Common myeloid progenitor, CD34-positive (primary cell): ENCODE measurements at regions of chr11 and their contacts with region 1.

Region 1: GRCh38 chr11:64723117-64723906 is at the start of gene NRXN2:
- DNase-seq: peak; percentile 72 to 80 (median 77)
- H3K4me3 ChIP-seq: peak within 1 kb of the TSS; percentile 37 to 74 (median 60)
- H3K27ac ChIP-seq: no peak within 1 kb of the TSS
- H3K4me1 ChIP-seq: peaks cover 0 to 27% (median 16%) of the 10 kb centered on the region in 4 experiments
- H3K27me3 ChIP-seq: peaks cover 0 to 22% (median 5%) of the 10 kb centered on the region in 5 experiments

Region 2: DNA sequence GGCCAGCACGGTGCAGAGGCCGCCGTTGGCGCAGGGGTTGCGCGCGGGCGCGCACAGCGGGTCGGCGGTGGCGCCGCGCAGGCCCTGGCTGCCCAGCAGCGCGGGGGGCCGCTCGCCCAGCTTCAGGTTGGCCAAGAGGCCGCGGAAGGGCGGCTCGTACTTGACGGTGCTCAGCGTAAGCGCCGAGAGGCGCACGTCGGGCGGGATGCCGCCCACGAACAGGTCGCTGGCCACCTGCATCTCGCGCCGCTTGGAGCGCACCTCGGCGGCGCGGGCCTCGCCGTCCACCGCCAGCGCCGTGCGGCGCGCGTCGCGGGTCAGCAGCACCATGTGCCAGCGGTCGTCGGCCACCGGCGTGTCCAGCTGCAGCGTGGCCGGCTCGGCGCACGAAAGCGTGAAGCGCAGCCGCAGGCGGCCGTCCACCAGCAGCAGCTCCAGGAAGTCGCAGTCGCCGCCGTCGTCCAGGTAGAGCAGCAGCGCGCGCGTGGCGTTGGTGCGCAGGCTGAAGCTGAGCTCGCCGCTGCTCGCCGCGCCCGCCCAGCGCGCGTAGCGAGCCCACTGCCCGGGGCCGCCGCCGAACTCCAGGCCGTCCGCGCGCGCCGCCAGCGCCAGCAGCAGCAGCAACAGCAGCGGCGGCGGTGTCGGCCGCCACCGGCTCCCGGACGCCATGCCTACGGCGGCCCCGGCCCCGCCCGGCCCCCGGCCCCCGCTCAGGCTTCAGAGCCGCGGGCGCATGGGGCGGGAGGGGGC is 10.1 kb before region 1 on chr11:
- CTCF ChIA-PET with region 1: interaction called, 10 read pairs
- POLR2A ChIA-PET with region 1: no interaction called
- DNase-seq: peak; percentile 54 to 83 (median 78)
- H3K4me3 ChIP-seq: peak overlapping the region in 4 of 7 experiments; percentile 8 to 42 (median 15)
- H3K27ac ChIP-seq: no peak overlapping the region
- H3K4me1 ChIP-seq: peaks cover 0 to 40% (median 37%) of the 10 kb centered on the region in 4 experiments
- H3K27me3 ChIP-seq: peaks cover 0 to 73% (median 35%) of the 10 kb centered on the region in 5 experiments

Region 3: GRCh38 chr11:64734811-64735724 is 11.8 kb after region 1 on chr11:
- CTCF ChIA-PET with region 1: interaction called, 11 read pairs
- POLR2A ChIA-PET with region 1: no interaction called
- DNase-seq: no peak
- H3K4me3 ChIP-seq: no peak overlapping the region
- H3K27ac ChIP-seq: no peak overlapping the region
- H3K4me1 ChIP-seq: peaks cover 0 to under 1% (median 0%) of the 10 kb centered on the region in 4 experiments
- H3K27me3 ChIP-seq: no peaks in the 10 kb centered on the region

Region 4: DNA sequence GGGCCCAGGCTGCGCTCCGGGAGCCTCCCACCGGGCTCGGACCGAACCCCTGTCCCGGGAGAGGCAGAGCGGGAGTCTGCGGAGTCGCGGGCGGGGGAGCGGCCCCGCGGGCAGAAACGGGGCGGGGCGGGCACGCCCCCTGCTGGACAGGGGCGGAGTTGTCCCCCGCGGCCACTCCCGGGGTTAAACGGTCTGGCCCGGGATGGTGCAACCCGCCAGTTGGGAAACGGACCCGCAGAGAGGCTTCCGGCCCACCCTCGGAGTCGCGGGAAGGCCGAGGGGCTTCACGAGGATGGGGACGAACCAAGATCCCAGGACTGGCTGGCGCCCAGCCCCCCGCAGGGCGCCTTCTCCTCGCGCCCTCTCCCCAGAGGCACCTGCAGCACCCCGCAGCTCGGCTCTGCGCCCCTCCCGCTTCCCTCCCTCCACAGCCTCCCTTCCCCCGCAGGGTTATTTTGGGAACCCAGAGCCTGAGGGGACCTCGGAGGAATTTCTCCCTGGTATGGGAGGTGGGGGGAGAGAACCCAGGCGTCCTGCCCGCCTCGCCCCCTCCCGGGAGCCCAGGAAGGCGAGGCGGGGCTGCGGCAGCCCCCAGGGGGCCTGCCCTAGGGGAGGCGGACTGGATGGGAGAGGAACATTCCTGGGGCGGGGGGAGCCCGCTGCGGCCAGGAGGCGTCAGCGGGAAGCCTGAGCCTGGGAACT is 19.7 kb after region 1 on chr11:
- CTCF ChIA-PET with region 1: interaction called, 10 read pairs
- POLR2A ChIA-PET with region 1: no interaction called
- DNase-seq: peak; percentile 54 to 72 (median 66)
- H3K4me3 ChIP-seq: peak overlapping the region; percentile 70 to 90 (median 85)
- H3K27ac ChIP-seq: peak overlapping the region in 1 of 2 experiments; percentile 74
- H3K4me1 ChIP-seq: peaks cover 0 to 54% (median 42%) of the 10 kb centered on the region in 4 experiments
- H3K27me3 ChIP-seq: no peaks in the 10 kb centered on the region

Region 5: GRCh38 chr11:64767344-64768299 is 44.3 kb after region 1 on chr11:
- CTCF ChIA-PET with region 1: no interaction called
- POLR2A ChIA-PET with region 1: no interaction called
- DNase-seq: peak; percentile 77 to 88 (median 84)
- H3K4me3 ChIP-seq: no peak overlapping the region
- H3K27ac ChIP-seq: peak overlapping the region; percentile 16 to 52
- H3K4me1 ChIP-seq: peaks cover 20 to 66% (median 53%) of the 10 kb centered on the region in 4 experiments
- H3K27me3 ChIP-seq: no peaks in the 10 kb centered on the region

Region 6: GRCh38 chr11:64864473-64865285 is 141.4 kb after region 1 on chr11:
- CTCF ChIA-PET with region 1: no interaction called
- POLR2A ChIA-PET with region 1: no interaction called
- DNase-seq: peak in 2 of 3 donors; percentile 55 to 64
- H3K4me3 ChIP-seq: no peak overlapping the region
- H3K27ac ChIP-seq: peak overlapping the region in 1 of 2 experiments; percentile 64
- H3K4me1 ChIP-seq: peaks cover 7 to 62% (median 51%) of the 10 kb centered on the region in 4 experiments
- H3K27me3 ChIP-seq: no peaks in the 10 kb centered on the region